Posterior vena cava (tissue), 2 donors: ENCODE measurements at regions of chr4 and their contacts with region 1.

Region 1: DNA sequence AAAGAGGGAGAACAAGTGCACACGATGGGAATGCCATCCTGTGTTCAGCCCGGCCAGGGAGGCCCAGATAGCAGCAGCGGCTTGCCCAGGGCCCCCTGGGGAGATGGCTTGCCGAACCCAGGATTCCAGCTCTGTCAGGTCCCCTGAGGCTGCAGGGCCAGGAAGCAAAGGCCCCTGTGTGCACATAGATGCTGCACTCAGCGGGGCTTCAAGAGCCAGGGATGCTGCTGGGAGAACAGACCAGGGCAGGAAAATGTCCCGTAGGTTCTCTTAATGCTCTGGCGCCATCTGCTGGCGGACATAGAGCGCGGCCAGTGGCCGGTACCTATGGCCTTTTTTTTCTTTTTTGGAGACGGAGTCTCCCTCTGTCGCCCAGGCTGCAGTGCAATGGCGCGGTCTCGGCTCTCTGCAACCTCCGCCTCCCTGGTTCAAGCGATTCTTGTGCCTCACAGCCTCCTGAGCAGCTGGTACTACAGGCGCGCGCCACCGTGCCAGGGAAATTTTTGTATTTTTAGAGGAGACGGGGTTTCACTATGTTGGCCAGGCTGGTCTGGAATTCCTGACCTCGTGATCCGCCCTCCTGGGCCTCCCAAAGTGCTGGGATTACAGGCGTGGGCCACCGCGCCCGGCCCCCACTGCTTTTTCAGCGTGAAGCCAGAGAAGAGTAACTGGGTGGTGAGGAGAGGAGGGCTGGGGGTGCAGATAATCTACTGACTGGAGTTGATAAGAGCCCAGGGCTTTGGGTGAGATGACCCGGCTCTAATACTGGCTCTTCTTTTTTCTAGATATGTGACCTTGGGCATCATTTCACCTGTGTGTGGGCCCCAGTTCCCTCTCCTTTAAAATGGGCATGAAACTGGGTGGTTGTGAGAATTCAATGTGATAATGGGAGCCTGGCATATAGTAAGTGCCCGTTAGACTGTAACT is 22.5 kb downstream of the MED28 start:
- DNase-seq: peak; percentile 94

Region 2: DNA sequence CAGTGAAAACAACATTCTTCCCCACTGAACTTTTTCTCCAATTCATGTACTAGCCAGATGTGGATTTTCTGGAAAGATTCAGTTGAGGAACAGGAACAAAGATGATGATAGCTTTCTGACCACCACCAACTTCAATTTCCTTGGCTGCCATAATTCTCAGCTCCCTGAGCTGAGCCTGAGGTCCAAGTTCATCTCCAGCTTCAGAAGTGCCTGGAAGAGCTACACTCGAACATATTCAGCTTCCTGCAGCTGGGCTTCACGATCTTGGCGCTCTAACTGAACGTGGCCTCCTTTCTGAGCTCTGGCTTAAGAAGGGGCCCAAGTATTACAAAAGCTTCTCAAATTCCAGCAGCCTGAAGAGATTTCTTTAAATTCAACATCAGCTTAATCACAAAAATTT is 209.0 kb before region 1 on chr4:
- intact Hi-C with region 1: no loop called
- DNase-seq: no peak

Region 3: DNA sequence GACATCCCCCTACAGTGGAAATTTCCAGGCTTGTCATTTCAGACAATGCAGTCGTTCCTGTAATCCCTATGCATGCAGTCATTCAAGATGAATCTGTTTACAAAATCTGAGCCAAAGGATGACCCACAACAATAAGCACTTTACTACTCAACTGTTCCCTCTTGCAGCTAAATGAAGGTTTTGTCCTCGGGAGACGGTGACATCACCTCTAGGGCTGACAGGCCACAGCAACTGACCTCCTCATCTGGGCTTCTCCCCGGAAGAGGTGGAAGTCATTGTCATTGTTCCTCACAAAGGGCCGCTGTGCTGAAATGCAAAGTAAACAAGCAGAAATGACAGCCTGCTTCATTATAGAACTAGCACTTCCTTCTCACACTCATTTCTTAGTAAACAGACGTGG is 92.8 kb before region 1 on chr4:
- intact Hi-C with region 1: loop called (anchors 5 kb)
- DNase-seq: no peak